Colonic mucosa (tissue), 4 donors: ENCODE measurements at regions of chr17 and their contacts with region 1.

Region 1: DNA sequence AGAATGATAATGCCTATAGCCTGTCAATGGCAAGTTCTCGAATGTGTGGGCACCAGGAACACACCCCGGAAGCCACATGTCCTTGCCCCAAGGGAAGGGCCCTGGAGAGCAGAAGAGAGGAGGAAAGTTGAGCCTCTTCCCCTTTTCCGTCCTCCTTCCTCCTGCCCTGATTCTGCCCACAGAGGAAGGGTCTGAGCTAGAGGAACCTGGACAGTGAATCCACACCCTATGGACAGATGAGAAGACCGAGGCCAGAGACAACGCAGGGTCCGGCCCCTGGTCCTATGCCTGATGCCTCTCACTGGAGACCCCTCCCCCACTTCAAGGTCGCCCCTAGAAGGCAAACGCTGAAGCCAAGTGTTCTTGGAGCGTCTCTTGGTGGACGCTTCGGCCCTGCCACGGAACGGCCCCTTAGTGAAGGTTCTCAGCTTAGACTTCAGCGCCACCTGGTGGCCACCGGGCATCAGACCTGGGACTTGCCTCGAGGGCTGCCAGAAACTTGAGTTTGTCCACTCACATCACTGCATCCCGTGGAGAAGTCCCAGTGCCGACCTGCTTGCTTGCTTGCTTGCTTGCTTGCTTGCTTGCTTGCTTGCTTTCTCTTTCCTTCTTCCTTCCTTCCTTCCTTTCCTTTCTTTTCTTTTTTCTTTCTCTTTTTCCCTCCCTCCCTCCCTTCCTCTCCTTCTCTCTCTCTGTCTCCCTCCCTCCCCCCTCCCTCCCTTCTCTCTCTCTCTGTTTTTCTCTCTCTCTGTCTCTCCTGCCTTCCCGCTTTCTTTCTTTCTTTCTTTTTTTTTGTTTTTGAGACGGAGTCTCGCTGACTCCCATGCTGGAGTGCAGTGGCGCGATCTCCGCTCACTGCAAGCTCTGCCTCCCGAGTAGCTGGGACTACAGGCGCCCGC is 20.6 kb upstream of the SPNS3 start:
- DNase-seq: peak; percentile 92
- H3K4me3 ChIP-seq: no peak overlapping the region
- H3K27ac ChIP-seq: no peak overlapping the region
- H3K4me1 ChIP-seq: no peaks in the 10 kb centered on the region
- H3K27me3 ChIP-seq: no peaks in the 10 kb centered on the region
- CTCF ChIP-seq: peak; percentile 75

Region 2: DNA sequence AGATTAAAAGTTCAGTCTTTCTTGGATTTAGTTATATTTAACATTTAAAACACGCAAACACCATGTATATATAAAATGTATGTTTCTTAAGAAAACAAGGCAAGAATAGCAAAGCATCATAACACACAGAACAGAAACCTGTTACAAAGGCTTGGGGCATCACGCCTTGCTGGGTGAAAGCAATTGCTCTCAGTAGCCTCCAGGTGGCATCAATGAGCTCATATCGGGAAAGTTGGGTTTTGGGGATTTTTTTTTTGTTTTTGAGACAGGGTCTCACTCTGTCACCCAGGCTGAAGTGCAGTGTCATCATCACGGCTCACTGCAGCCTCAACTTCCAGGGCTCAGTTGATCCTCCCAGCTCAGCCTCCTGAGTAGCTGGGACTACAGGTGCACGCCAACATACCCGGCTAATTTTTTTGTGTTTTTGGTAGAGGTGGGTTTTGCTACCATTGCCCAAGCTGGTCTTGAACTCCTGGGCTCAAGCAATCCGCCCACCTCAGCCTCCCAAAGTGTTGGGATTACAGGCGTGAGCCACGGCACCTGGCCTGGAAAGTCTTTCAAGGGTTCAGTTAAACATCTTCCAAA is 213.3 kb before region 1 on chr17:
- intact Hi-C with region 1: loop called (anchors 5 kb)
- DNase-seq: no peak
- H3K4me3 ChIP-seq: no peak overlapping the region
- H3K27ac ChIP-seq: no peak overlapping the region
- H3K4me1 ChIP-seq: no peaks in the 10 kb centered on the region
- H3K27me3 ChIP-seq: no peaks in the 10 kb centered on the region
- CTCF ChIP-seq: peak; percentile 66

Region 3: DNA sequence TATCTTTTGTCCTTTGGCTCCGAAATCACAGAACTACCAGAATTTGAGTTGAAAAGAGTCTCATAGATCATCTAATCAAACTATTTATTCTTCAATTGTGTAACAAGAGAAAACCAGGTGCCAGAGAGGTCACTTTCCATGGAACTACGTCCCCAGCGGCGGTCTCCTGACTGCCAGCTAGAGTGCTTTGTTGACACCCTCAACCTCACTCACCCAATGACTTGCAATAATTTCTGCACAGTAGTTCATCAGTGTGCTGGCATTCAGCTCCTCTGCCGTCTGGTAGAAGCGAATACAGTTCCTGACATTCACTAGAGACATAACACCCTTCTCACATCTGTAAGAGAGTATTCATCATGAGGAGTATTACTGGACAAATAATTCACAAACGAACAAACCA is 203.6 kb before region 1 on chr17:
- intact Hi-C with region 1: loop called (anchors 5 kb)
- DNase-seq: no peak
- H3K4me3 ChIP-seq: no peak overlapping the region
- H3K27ac ChIP-seq: no peak overlapping the region
- H3K4me1 ChIP-seq: no peaks in the 10 kb centered on the region
- H3K27me3 ChIP-seq: no peaks in the 10 kb centered on the region
- CTCF ChIP-seq: no peak

Region 4: GRCh38 chr17:4759776-4760236 is 346.6 kb after region 1 on chr17:
- intact Hi-C with region 1: no loop called
- DNase-seq: no peak
- H3K4me3 ChIP-seq: no peak overlapping the region
- H3K27ac ChIP-seq: no peak overlapping the region
- H3K4me1 ChIP-seq: no peaks in the 10 kb centered on the region
- H3K27me3 ChIP-seq: no peaks in the 10 kb centered on the region
- CTCF ChIP-seq: no peak